Mammary epithelial cell (primary cell): ENCODE measurements at regions of chr22 and their contacts with region 1.

Region 1: DNA sequence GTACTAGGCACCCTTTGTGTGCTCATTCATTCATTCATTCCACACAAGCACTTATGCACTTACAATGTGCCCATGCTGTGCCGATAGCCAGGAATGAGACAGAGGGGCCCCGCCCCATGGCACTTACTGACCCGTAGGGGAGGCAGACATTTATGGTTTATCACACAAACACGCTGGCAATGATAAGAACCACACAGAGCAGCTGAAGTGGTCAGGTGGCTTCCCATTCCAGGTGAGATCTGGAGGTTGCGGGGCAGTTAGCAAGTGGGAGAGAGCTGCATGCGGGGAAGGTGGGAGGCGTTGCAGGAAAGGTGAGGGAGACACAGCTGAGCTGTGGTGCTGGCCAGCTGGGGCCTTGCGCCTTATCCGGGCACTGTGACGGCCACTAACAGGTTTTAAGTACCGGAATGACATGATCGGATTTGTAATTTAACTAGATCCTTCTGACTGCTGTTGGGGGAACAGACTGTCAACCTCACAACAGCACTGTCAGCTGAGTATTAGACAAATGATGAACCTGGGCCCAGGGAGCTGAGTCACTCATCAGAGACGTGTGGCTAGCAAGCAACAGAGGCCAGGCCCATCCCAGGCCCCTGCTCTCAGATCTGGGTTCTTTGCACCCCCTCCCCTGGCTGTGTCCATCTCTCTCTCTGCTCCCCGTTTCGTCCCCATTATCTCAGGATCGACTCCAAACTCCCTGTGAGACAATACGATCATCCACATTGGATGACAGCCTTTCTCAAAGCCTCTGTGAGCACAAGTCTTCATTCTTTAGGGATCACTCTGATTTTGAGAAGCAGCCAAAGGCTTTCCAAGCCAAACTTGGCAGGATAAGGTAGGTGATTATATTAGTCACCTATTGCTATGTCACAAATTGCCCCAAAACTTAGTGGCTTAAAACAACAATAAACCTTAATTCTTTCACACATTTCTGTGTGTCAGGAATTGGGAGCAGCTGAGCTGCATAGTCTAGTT is 28.4 kb downstream of the RASD2 start:
- DNase-seq: peak; percentile 70
- H3K4me3 ChIP-seq: no peak overlapping the region
- H3K27ac ChIP-seq: no peak overlapping the region
- H3K4me1 ChIP-seq: peaks cover 13% of the 10 kb centered on the region
- H3K27me3 ChIP-seq: no peaks in the 10 kb centered on the region
- CTCF ChIP-seq: no peak

Region 2: GRCh38 chr22:35409783-35410662 is 159.0 kb before region 1 on chr22:
- CTCF ChIA-PET with region 1: no interaction called
- dilution Hi-C with region 1: no loop called
- in situ Hi-C with region 1: no loop called
- intact Hi-C with region 1: no loop called
- DNase-seq: no peak
- H3K4me3 ChIP-seq: no peak overlapping the region
- H3K27ac ChIP-seq: no peak overlapping the region
- H3K4me1 ChIP-seq: no peaks in the 10 kb centered on the region
- H3K27me3 ChIP-seq: no peaks in the 10 kb centered on the region
- CTCF ChIP-seq: no peak

Region 3: GRCh38 chr22:35489239-35489638 is 79.8 kb before region 1 on chr22:
- CTCF ChIA-PET with region 1: no interaction called
- dilution Hi-C with region 1: loop called (anchors 5 kb)
- in situ Hi-C with region 1: no loop called
- intact Hi-C with region 1: no loop called
- DNase-seq: peak; percentile 49
- H3K4me3 ChIP-seq: no peak overlapping the region
- H3K27ac ChIP-seq: no peak overlapping the region
- H3K4me1 ChIP-seq: peaks cover 3% of the 10 kb centered on the region
- H3K27me3 ChIP-seq: no peaks in the 10 kb centered on the region
- CTCF ChIP-seq: no peak

Region 4: DNA sequence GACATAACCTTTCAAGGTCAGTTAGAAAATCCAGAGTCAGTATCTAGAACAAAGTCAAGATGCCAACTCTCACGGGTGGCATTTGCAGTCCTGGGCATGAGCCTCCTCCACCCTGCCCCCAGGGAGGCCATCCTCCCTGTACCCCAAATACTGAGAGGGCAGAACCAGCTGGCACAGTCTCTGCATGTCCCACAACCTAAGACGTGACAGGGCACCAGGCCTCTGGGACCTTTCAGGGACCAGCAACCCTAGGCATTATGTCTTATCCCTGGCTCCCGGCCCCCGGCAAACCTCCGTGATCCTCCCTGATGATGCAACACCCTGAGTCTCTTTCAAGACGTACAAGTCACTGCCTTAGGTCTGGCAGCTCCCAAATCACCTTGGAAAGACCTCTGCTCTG is 46.1 kb after region 1 on chr22:
- CTCF ChIA-PET with region 1: no interaction called
- dilution Hi-C with region 1: loop called (anchors 5 kb)
- in situ Hi-C with region 1: no loop called
- intact Hi-C with region 1: no loop called
- DNase-seq: no peak
- H3K4me3 ChIP-seq: no peak overlapping the region
- H3K27ac ChIP-seq: no peak overlapping the region
- H3K4me1 ChIP-seq: no peaks in the 10 kb centered on the region
- H3K27me3 ChIP-seq: no peaks in the 10 kb centered on the region
- CTCF ChIP-seq: no peak